PC-3 (cell line): ENCODE measurements at regions of chr11 and their contacts with region 1.

Region 1: GRCh38 chr11:57345555-57346211 is 7.5 kb downstream of the P2RX3 start:
- DNase-seq: peak; percentile 94
- ATAC-seq: peak; percentile 81
- H3K4me3 ChIP-seq: no peak overlapping the region
- H3K27ac ChIP-seq: no peak overlapping the region
- H3K4me1 ChIP-seq: no peaks in the 10 kb centered on the region
- H3K27me3 ChIP-seq: no peaks in the 10 kb centered on the region
- CTCF ChIP-seq: peak; percentile 79

Region 2: GRCh38 chr11:57116654-57117053 is 229.0 kb before region 1 on chr11:
- CTCF ChIA-PET with region 1: no interaction called
- POLR2A ChIA-PET with region 1: no interaction called
- intact Hi-C with region 1: loop called (anchors 5 kb)
- DNase-seq: peak; percentile 69
- ATAC-seq: peak; percentile 83
- H3K4me3 ChIP-seq: no peak overlapping the region
- H3K27ac ChIP-seq: no peak overlapping the region
- H3K4me1 ChIP-seq: no peaks in the 10 kb centered on the region
- H3K27me3 ChIP-seq: peaks cover 20% of the 10 kb centered on the region
- CTCF ChIP-seq: peak; percentile 83

Region 3: GRCh38 chr11:57224537-57224936 is 121.1 kb before region 1 on chr11:
- CTCF ChIA-PET with region 1: no interaction called
- POLR2A ChIA-PET with region 1: no interaction called
- intact Hi-C with region 1: no loop called
- DNase-seq: peak; percentile 56
- ATAC-seq: peak; percentile 61
- H3K4me3 ChIP-seq: no peak overlapping the region
- H3K27ac ChIP-seq: no peak overlapping the region
- H3K4me1 ChIP-seq: no peaks in the 10 kb centered on the region
- H3K27me3 ChIP-seq: peaks cover 48% of the 10 kb centered on the region
- CTCF ChIP-seq: no peak

Region 4: GRCh38 chr11:57410287-57410686 is 64.6 kb after region 1 on chr11:
- CTCF ChIA-PET with region 1: no interaction called
- POLR2A ChIA-PET with region 1: no interaction called
- intact Hi-C with region 1: no loop called
- DNase-seq: peak; percentile 74
- ATAC-seq: 0 out of 2 replicates have a peak, but pooled peaks have one; percentile 8
- H3K4me3 ChIP-seq: no peak overlapping the region
- H3K27ac ChIP-seq: no peak overlapping the region
- H3K4me1 ChIP-seq: peaks cover 20% of the 10 kb centered on the region
- H3K27me3 ChIP-seq: no peaks in the 10 kb centered on the region
- CTCF ChIP-seq: no peak

Region 5: GRCh38 chr11:57426929-57427726 is 81.4 kb after region 1 on chr11 and contains the start of gene SLC43A3:
- CTCF ChIA-PET with region 1: no interaction called
- POLR2A ChIA-PET with region 1: no interaction called
- intact Hi-C with region 1: no loop called
- DNase-seq: peak; percentile 88
- ATAC-seq: peak; percentile 73
- H3K4me3 ChIP-seq: peak within 1 kb of the TSS; percentile 62
- H3K27ac ChIP-seq: peak within 1 kb of the TSS; percentile 92
- H3K4me1 ChIP-seq: peaks cover 45% of the 10 kb centered on the region
- H3K27me3 ChIP-seq: no peaks in the 10 kb centered on the region
- CTCF ChIP-seq: no peak
- total RNA-seq, gene SLC43A3: 31.3 and 35.0 TPM in 2 replicates

Region 6: DNA sequence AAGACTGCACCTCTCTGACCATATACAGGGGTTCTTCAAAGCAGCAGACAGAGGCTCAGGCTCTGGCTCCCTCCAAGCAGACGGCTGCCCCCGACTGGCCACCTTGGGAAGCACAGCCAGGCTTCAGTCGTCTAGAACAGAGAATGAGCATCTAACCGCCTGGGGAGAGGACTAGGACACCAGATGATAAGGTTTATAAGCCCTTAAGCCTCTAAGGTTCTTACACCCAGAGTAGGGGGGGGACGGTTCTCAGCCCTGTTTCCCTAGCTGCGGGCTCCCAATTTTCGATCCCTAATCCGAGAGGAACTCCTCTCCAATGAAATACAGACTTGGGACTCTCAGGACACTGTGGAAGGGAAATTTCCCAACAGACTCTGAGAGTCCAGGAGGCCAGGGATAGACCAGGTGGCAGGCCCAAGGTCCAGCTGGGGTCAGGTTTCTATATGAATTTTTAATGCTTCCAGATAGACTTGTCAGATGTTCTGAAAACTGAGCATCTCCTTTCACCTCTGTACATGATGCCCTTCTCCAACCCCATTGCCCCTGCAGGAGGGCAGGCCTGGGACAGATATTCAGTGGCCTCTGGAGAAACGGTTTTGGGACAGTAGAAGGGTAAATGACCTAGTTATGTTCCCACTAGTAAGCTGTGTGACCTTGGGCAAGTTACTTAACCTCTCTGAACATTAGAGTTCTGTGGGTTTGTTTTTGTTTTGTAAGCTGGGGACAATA is 134.9 kb after region 1 on chr11:
- CTCF ChIA-PET with region 1: interaction called, 4 read pairs
- POLR2A ChIA-PET with region 1: no interaction called
- intact Hi-C with region 1: loop called (anchors 10 kb)
- DNase-seq: peak; percentile 80
- ATAC-seq: peak; percentile 31; the same call in 1 of the 2 replicates
- H3K4me3 ChIP-seq: no peak overlapping the region
- H3K27ac ChIP-seq: no peak overlapping the region
- H3K4me1 ChIP-seq: peaks cover 23% of the 10 kb centered on the region
- H3K27me3 ChIP-seq: no peaks in the 10 kb centered on the region
- CTCF ChIP-seq: peak; percentile 93

Region 7: GRCh38 chr11:57515332-57516060 is 169.8 kb after region 1 on chr11 and contains the start of gene SLC43A1:
- CTCF ChIA-PET with region 1: interaction called, 9 read pairs
- POLR2A ChIA-PET with region 1: no interaction called
- intact Hi-C with region 1: loop called (anchors 1 kb)
- DNase-seq: peak; percentile 46
- ATAC-seq: peak; percentile 57
- H3K4me3 ChIP-seq: peak within 1 kb of the TSS; percentile 94
- H3K27ac ChIP-seq: no peak within 1 kb of the TSS
- H3K4me1 ChIP-seq: peaks cover 9% of the 10 kb centered on the region
- H3K27me3 ChIP-seq: no peaks in the 10 kb centered on the region
- CTCF ChIP-seq: peak; percentile 25; the same call in 1 of the 2 replicates
- total RNA-seq, gene SLC43A1: 7.4 and 12.4 TPM in 2 replicates

Region 8: DNA sequence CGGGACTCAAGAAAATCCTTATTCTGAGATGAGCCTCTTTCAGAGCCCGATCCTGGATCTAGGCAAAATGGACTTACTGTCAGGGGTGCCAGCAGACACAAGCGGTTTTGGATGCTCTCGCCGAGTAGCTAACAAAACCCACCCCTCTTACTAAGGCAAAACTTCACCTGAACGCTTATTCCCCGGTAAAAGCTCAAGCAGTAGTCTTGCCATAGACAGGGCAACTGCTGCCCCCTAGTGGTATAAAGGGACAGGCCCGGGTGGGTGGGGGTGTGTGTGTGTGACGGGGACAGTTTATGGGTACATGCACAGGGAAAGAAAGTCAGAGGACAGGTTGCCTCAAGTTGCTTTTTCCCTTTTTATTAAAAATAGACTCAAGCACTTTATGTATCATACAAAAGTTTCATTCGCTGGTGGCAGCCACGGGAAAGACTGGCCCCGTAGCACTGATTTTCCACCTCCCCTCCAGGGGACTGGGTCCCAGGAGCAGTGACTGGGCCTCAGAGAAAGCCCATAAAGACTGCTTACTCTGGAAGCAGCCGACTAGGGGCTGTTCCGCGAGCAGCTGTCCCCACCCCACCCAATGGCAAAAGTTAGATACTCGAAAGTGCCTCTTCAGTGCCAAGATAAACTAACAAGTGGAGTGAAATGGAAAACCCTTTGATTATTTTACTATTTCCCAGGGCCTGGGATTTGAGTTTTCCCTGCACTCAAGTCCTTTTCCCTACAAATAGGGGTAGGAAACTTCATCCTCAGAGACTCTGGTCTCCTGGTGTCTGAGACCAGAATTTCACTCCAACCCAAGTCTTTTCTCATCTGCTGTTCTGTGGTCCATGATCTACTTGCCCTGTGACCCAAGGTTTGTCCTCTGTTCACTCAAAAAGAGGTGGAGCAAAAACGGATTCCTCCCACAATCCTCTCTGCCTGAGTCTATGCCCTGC is 299.3 kb after region 1 on chr11:
- CTCF ChIA-PET with region 1: interaction called, 16 read pairs
- POLR2A ChIA-PET with region 1: no interaction called
- intact Hi-C with region 1: loop called (anchors 2 kb)
- DNase-seq: peak; percentile 88
- ATAC-seq: peak; percentile 65
- H3K4me3 ChIP-seq: no peak overlapping the region
- H3K27ac ChIP-seq: no peak overlapping the region
- H3K4me1 ChIP-seq: peaks cover 15% of the 10 kb centered on the region
- H3K27me3 ChIP-seq: peaks cover 29% of the 10 kb centered on the region
- CTCF ChIP-seq: peak; percentile 96